CD8-positive, alpha-beta memory T cell (primary cell): ENCODE measurements at regions of chr1 and their contacts with region 1.

Region 1: GRCh38 chr1:193427524-193427923 is 241.1 kb upstream of the B3GALT2 start:
- DNase-seq: no peak
- H3K4me3 ChIP-seq: no peak overlapping the region
- H3K4me3 Mint-ChIP-seq: no peak overlapping the region
- H3K27ac ChIP-seq: no peak overlapping the region
- H3K27ac Mint-ChIP-seq: peak overlapping the region in 2 of 8 donors; percentile 25 to 45
- H3K4me1 ChIP-seq: no peaks in the 10 kb centered on the region
- H3K4me1 Mint-ChIP-seq: peaks cover 3 to 14% (median 11%) of the 10 kb centered on the region in 3 donors
- H3K27me3 ChIP-seq: no peaks in the 10 kb centered on the region
- H3K27me3 Mint-ChIP-seq: no peaks in the 10 kb centered on the region

Region 2: GRCh38 chr1:193462629-193463320 is 35.3 kb after region 1 on chr1:
- CTCF ChIA-PET with region 1: no interaction called
- POLR2A ChIA-PET with region 1: interaction called, 14 read pairs
- DNase-seq: no peak
- H3K4me3 ChIP-seq: peak overlapping the region; percentile 3
- H3K4me3 Mint-ChIP-seq: peak overlapping the region; percentile 68 to 79 (median 71)
- H3K27ac ChIP-seq: peak overlapping the region; percentile 4
- H3K27ac Mint-ChIP-seq: peak overlapping the region in 7 of 8 donors; percentile 84 to 98 (median 90)
- H3K4me1 ChIP-seq: peaks cover 18% of the 10 kb centered on the region
- H3K4me1 Mint-ChIP-seq: peaks cover 53 to 62% (median 59%) of the 10 kb centered on the region in 3 donors
- H3K27me3 ChIP-seq: no peaks in the 10 kb centered on the region
- H3K27me3 Mint-ChIP-seq: no peaks in the 10 kb centered on the region